CD4-positive, alpha-beta T cell (primary cell): ENCODE measurements at regions of chr12 and their contacts with region 1.

Region 1: GRCh38 chr12:124036674-124037109 is 63.7 kb downstream of the ZNF664 start:
- DNase-seq: peak; percentile 16 to 74 (median 30)
- ATAC-seq: peak; percentile 58
- H3K4me3 ChIP-seq: no peak overlapping the region
- H3K4me3 Mint-ChIP-seq: no peak overlapping the region
- H3K27ac ChIP-seq: no peak overlapping the region
- H3K27ac Mint-ChIP-seq: no peak overlapping the region
- H3K4me1 ChIP-seq: no peaks in the 10 kb centered on the region
- H3K4me1 Mint-ChIP-seq: no peaks in the 10 kb centered on the region
- H3K27me3 ChIP-seq: no peaks in the 10 kb centered on the region
- H3K27me3 Mint-ChIP-seq: no peaks in the 10 kb centered on the region
- CTCF ChIP-seq: peak; percentile 98

Region 2: GRCh38 chr12:124007826-124008570 is 28.7 kb before region 1 on chr12:
- CTCF ChIA-PET with region 1: no interaction called
- POLR2A ChIA-PET with region 1: no interaction called
- intact Hi-C with region 1: no loop called
- DNase-seq: peak in 2 of 14 experiments; percentile 38 to 42
- ATAC-seq: peak; percentile 28
- H3K4me3 ChIP-seq: no peak overlapping the region
- H3K4me3 Mint-ChIP-seq: peak overlapping the region; percentile 31
- H3K27ac ChIP-seq: no peak overlapping the region
- H3K27ac Mint-ChIP-seq: peak overlapping the region; percentile 62
- H3K4me1 ChIP-seq: peaks cover 18% of the 10 kb centered on the region
- H3K4me1 Mint-ChIP-seq: peaks cover 34% of the 10 kb centered on the region
- H3K27me3 ChIP-seq: no peaks in the 10 kb centered on the region
- H3K27me3 Mint-ChIP-seq: no peaks in the 10 kb centered on the region
- CTCF ChIP-seq: no peak

Region 3: DNA sequence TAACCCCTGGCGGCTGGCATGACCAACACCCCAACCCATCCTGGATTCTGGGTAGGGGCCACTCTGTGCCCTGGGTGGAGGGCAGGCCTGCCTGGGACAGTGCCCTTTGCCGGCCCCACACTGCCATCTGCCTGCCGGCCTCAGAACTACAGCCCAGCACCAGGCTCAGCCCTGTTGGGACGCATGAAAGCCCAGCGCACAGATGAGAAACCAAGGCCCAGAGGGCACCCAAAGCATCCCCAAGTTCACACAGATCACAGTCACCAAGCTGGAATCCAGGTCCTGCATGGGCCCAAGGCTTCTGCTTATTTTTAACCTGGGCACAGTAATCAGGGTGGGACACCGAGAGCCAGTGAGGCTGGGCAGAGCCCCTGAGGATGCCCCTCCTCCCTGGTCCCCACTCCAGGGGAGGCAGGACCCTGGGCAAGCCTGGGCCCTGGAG is 284.4 kb after region 1 on chr12:
- CTCF ChIA-PET with region 1: no interaction called
- POLR2A ChIA-PET with region 1: no interaction called
- intact Hi-C with region 1: loop called (anchors 1 kb)
- DNase-seq: peak; percentile 13 to 70 (median 49)
- ATAC-seq: peak; percentile 84
- H3K4me3 ChIP-seq: no peak overlapping the region
- H3K4me3 Mint-ChIP-seq: no peak overlapping the region
- H3K27ac ChIP-seq: no peak overlapping the region
- H3K27ac Mint-ChIP-seq: no peak overlapping the region
- H3K4me1 ChIP-seq: no peaks in the 10 kb centered on the region
- H3K4me1 Mint-ChIP-seq: no peaks in the 10 kb centered on the region
- H3K27me3 ChIP-seq: no peaks in the 10 kb centered on the region
- H3K27me3 Mint-ChIP-seq: no peaks in the 10 kb centered on the region
- CTCF ChIP-seq: peak; percentile 57

Region 4: DNA sequence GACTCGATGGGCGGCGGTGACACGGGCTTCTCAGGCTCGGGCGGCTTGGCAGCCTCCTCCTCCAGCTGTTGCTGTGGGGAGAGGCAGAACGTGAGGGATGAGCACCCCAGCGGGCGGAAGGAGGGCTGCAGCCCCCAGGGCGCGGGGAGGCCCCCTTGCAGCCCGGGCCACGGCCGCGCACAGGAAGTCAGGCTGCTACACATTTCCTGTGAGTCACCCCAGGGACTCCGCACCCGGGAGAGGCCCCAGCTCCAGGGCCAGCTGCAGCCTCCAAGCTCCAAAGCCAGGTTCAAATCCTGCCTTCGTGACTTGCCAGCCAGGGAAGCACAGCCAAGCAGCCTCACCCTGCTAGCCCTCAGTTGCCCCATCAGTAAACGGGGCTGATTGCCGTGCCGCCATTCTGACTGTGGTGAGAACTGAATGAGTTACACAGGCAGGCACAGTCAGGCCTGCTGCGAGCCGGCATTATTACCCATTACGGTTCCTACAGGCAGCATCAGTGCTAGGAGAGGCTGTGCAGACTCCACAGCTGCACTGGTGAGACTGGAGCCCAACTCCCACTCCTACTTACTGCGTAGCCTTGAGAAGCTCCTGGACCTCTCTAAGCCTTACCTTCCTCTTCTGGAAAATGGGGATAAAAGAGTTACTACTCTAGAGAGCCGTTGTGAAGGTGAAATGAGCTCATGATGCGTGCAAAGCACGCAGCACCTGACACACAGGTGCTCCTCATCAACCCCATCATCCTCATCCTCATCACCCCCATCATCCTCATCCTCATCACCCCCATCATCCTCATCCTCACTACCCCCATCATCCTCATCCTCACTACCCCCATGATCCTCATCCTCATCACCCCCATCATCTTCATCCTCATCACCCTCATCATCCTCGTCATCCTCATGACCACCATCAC is 429.8 kb after region 1 on chr12:
- CTCF ChIA-PET with region 1: no interaction called
- POLR2A ChIA-PET with region 1: no interaction called
- intact Hi-C with region 1: loop called in 1 of 2 experiments (anchors 1 kb)
- DNase-seq: peak; percentile 78 to 96 (median 86)
- ATAC-seq: peak; percentile 92
- H3K4me3 ChIP-seq: peak overlapping the region; percentile 52
- H3K4me3 Mint-ChIP-seq: peak overlapping the region; percentile 74
- H3K27ac ChIP-seq: peak overlapping the region; percentile 74 to 82
- H3K27ac Mint-ChIP-seq: peak overlapping the region; percentile 91
- H3K4me1 ChIP-seq: peaks cover 50% of the 10 kb centered on the region
- H3K4me1 Mint-ChIP-seq: peaks cover 59% of the 10 kb centered on the region
- H3K27me3 ChIP-seq: no peaks in the 10 kb centered on the region
- H3K27me3 Mint-ChIP-seq: no peaks in the 10 kb centered on the region
- CTCF ChIP-seq: peak; percentile 57

Region 5: GRCh38 chr12:124567661-124568373 is 531.1 kb after region 1 on chr12:
- CTCF ChIA-PET with region 1: no interaction called
- POLR2A ChIA-PET with region 1: no interaction called
- intact Hi-C with region 1: loop called in 1 of 2 experiments (anchors 10 kb)
- DNase-seq: peak; percentile 68 to 94 (median 83)
- ATAC-seq: peak; percentile 71
- H3K4me3 ChIP-seq: peak overlapping the region; percentile 72
- H3K4me3 Mint-ChIP-seq: peak overlapping the region; percentile 95
- H3K27ac ChIP-seq: peak overlapping the region in 1 of 2 donors; percentile 35
- H3K27ac Mint-ChIP-seq: peak overlapping the region; percentile 87
- H3K4me1 ChIP-seq: peaks cover 51% of the 10 kb centered on the region
- H3K4me1 Mint-ChIP-seq: peaks cover 40% of the 10 kb centered on the region
- H3K27me3 ChIP-seq: no peaks in the 10 kb centered on the region
- H3K27me3 Mint-ChIP-seq: no peaks in the 10 kb centered on the region
- CTCF ChIP-seq: no peak

Region 6: DNA sequence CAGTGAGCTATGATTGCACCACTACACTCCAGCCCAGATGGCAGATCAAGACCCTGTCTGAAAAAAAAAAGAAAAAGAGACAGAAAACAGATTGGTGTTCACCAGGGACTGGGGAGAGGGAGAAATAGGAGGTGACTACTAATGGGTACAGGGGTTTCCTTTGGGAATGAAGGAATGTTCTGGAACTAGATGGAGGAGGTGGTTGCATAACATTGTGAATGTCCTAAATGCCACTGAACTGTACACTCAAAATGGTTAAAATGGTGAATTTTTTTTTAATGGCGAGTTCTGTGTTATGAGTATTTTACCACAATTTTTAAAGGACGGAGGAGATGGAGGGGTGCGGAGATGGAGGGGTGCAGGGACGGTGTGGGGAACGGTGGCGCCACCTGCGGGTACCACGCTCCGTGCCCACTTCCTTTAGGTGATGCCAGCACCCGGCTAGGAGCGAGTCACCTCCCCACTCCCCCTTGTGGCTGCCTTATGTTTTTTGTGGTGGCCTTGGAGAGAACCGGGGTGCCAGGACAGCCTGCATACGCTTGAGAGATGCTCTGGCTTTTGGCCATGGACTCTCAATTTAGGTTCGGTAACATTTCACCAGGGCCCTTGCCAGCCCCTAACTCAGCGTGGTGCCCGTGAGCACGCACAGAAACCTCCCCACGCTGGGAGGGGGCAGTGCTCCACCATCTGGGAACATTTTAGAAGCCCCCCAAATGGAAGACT is 861.7 kb after region 1 on chr12:
- CTCF ChIA-PET with region 1: no interaction called
- POLR2A ChIA-PET with region 1: no interaction called
- intact Hi-C with region 1: loop called (anchors 2 kb)
- DNase-seq: peak; percentile 49 to 89 (median 66)
- ATAC-seq: peak; percentile 100
- H3K4me3 ChIP-seq: no peak overlapping the region
- H3K4me3 Mint-ChIP-seq: peak overlapping the region; percentile 35
- H3K27ac ChIP-seq: no peak overlapping the region
- H3K27ac Mint-ChIP-seq: no peak overlapping the region
- H3K4me1 ChIP-seq: peaks cover 5% of the 10 kb centered on the region
- H3K4me1 Mint-ChIP-seq: peaks cover 12% of the 10 kb centered on the region
- H3K27me3 ChIP-seq: no peaks in the 10 kb centered on the region
- H3K27me3 Mint-ChIP-seq: no peaks in the 10 kb centered on the region
- CTCF ChIP-seq: peak; percentile 80